ENCODE measurements at regions of chrX and their contacts with region 1.

Region 1: GRCh38 chrX:76183289-76184049 is 10.6 kb downstream of the PBDC1 start:
- DNase-seq: no peak
- ATAC-seq: no peak
- H3K4me3 ChIP-seq: no peak overlapping the region
- H3K27ac ChIP-seq: no peak overlapping the region
- H3K4me1 ChIP-seq: no peaks in the 10 kb centered on the region
- H3K27me3 ChIP-seq: peaks cover 0 to 41% (median 0%) of the 10 kb centered on the region in 7 donors
- CTCF ChIP-seq: no peak

Region 2: DNA sequence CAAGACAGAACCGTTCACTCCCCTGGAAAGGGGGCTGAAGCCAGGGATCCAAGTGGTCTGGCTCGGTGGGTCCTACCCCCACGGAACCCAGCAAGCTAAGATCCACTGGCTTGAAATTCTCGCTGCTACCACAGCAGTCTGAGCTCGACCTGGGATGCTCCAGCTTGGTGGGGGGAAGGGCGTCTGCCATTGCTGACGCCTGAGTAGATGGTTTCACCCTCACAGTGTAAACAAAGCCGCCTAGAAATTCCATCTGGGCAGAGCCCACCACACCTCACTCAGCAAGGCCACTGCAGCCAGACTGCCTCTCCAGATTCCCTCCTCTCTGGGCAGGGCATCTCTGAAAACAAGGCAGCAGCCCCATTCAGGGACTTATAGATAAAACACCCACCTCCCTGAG is 24.0 kb before region 1 on chrX:
- intact Hi-C with region 1: loop called in 1 of 10 experiments (anchors 2 kb)
- DNase-seq: no peak
- ATAC-seq: no peak
- H3K4me3 ChIP-seq: no peak overlapping the region
- H3K27ac ChIP-seq: no peak overlapping the region
- H3K4me1 ChIP-seq: no peaks in the 10 kb centered on the region
- H3K27me3 ChIP-seq: peaks cover 0 to 90% (median 0%) of the 10 kb centered on the region in 7 donors
- CTCF ChIP-seq: no peak